MCF 10A (cell line): ENCODE measurements at regions of chr1 and their contacts with region 1.

Region 1: GRCh38 chr1:23959041-23959460 is 577 bp upstream of the PNRC2 start:
- DNase-seq: peak; percentile 85
- H3K4me3 Mint-ChIP-seq: peak overlapping the region; percentile 95
- H3K27ac Mint-ChIP-seq: peak overlapping the region; percentile 100
- H3K4me1 Mint-ChIP-seq: peaks cover 34% of the 10 kb centered on the region
- H3K27me3 Mint-ChIP-seq: no peaks in the 10 kb centered on the region
- CTCF ChIP-seq: no peak

Region 2: GRCh38 chr1:23800400-23801337 is 158.4 kb before region 1 on chr1 and contains the start of gene GALE:
- CTCF ChIA-PET with region 1: interaction called, 3 read pairs
- POLR2A ChIA-PET with region 1: interaction called, 18 read pairs
- intact Hi-C with region 1: loop called (anchors 1 kb)
- DNase-seq: peak; percentile 96
- H3K4me3 Mint-ChIP-seq: peak within 1 kb of the TSS; percentile 90
- H3K27ac Mint-ChIP-seq: peak within 1 kb of the TSS; percentile 91
- H3K4me1 Mint-ChIP-seq: no peaks in the 10 kb centered on the region
- H3K27me3 Mint-ChIP-seq: no peaks in the 10 kb centered on the region
- CTCF ChIP-seq: no peak
- total RNA-seq, gene GALE: 112 and 143 TPM in 2 replicates

Region 3: DNA sequence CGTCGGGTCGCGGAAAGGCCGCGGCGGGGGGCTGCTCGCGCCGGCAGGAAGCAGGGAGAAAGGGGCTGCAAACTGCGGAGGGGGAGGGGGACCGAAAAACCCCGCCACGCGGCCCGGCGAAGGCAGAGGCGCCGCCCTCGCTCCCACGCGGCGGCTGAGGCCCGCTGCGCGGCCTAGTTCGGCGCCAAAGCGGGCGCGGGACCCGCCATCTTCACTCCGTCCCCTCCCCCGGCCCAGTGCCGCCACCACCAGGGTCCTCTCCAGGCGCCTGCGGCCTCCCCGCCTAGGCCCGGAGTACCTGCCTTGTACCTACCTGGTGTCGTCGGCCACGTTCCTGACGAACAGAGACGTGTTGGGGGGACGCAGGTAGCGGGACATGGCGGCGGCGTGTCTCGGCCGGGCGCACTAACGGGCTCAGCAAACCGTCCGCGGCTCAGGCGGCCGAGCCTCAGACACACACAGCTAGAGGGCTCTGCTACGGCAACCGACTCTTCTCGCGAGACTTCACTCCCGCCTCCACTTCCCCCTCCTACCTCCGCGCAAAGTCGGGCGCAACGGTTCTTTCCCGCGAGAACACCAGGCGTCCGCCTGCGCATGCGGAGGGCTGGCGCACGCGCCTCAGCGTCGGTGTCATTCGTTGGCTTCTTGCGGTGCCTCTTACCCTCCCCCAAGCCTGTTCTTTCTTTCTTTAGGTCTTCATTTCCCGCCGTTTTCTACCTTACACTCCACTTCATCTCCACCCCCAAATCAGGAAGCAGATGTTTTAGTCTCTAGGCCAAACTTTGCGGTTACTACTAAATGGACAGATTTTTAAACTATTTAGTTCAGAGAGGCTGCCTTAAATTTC is 21.1 kb after region 1 on chr1 and contains the start of gene SRSF10:
- CTCF ChIA-PET with region 1: interaction called, 4 read pairs
- POLR2A ChIA-PET with region 1: interaction called, 97 read pairs
- intact Hi-C with region 1: no loop called
- DNase-seq: peak; percentile 98
- H3K4me3 Mint-ChIP-seq: peak within 1 kb of the TSS; percentile 91
- H3K27ac Mint-ChIP-seq: peak within 1 kb of the TSS; percentile 95
- H3K4me1 Mint-ChIP-seq: peaks cover 38% of the 10 kb centered on the region
- H3K27me3 Mint-ChIP-seq: no peaks in the 10 kb centered on the region
- CTCF ChIP-seq: no peak
- total RNA-seq, gene SRSF10: 121 and 134 TPM in 2 replicates

Region 4: DNA sequence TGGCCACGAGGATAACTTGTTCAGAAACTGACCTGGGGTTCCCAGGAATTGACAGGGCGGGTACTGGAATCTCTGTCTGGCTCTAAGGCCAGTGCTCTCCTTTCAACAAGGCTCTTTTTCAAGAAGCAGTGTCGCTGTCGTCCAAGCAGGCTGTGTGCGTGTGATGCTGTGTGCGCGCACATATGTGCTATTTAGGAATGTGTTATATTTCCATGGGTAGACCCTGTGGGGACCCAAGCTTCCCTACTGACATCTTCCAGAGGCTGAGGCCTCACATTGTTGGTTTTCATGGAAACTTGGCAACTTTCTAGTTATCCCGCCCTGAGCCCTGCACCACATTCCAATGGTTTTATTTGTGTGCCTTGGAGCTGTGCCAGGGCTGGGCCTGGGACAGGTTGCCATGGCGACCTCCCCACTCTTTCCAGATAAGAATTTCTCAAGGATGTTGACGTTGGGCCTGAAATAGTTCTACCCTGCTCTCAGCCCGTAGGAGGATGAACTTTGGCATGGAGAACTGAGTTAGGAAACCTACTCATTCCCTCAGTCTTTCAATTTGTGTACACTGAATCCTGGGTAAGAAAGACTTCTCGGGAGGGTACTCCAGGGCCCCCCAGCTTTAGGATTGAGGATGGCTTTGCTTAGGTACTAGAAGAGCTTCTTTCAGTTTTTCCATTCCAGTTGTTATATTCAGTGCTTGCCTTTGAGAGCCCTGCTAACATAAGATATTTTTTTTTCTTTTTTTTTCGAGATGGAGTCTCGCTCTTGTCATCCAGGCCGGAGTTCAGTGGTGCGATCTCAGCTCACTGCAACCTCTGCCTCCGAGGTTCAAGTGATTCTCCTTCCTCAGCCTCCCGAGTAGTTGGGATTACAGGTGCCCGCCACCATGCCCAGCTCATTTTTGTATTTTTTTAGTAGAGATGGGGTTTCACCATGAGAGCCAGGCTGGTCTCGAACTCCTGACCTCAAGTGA is 59.8 kb after region 1 on chr1:
- CTCF ChIA-PET with region 1: interaction called, 3 read pairs
- POLR2A ChIA-PET with region 1: interaction called, 43 read pairs
- intact Hi-C with region 1: no loop called
- DNase-seq: peak; percentile 99
- H3K4me3 Mint-ChIP-seq: peak overlapping the region; percentile 58
- H3K27ac Mint-ChIP-seq: peak overlapping the region; percentile 93
- H3K4me1 Mint-ChIP-seq: peaks cover 35% of the 10 kb centered on the region
- H3K27me3 Mint-ChIP-seq: no peaks in the 10 kb centered on the region
- CTCF ChIP-seq: no peak

Region 5: DNA sequence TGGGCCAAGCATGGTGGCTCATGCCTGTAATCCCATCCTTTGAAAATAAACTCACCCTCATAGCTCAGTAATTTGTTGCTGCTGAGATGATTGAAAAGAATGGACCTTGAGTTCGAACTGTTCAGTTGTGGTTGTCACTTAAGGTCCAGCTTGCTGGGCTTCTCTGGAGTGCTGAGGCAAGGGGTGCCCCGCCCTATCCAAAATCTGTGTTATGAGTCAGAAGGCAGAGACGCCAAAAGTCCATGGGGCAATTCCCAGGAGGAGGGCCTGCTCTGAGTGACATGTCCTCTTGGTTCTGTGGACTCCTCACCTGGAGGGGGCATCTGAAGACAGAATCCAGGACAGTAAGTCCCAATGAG is 88.0 kb after region 1 on chr1:
- CTCF ChIA-PET with region 1: no interaction called
- POLR2A ChIA-PET with region 1: interaction called, 20 read pairs
- intact Hi-C with region 1: no loop called
- DNase-seq: peak; percentile 94
- H3K4me3 Mint-ChIP-seq: peak overlapping the region; percentile 44
- H3K27ac Mint-ChIP-seq: peak overlapping the region; percentile 68
- H3K4me1 Mint-ChIP-seq: peaks cover 24% of the 10 kb centered on the region
- H3K27me3 Mint-ChIP-seq: no peaks in the 10 kb centered on the region
- CTCF ChIP-seq: no peak